ENCODE measurements at regions of chr10 and their contacts with region 1.

Region 1: GRCh38 chr10:25875556-25876165 is 58.4 kb upstream of the MYO3A start:
- DNase-seq: peak; percentile 66
- ATAC-seq: peak; percentile 75
- H3K4me3 ChIP-seq: no peak overlapping the region
- H3K4me3 Mint-ChIP-seq: no peak overlapping the region
- H3K27ac ChIP-seq: no peak overlapping the region
- H3K27ac Mint-ChIP-seq: no peak overlapping the region
- H3K4me1 ChIP-seq: no peaks in the 10 kb centered on the region
- H3K4me1 Mint-ChIP-seq: no peaks in the 10 kb centered on the region
- H3K27me3 ChIP-seq: peaks cover 0 to 4% (median 0%) of the 10 kb centered on the region in 4 experiments
- H3K27me3 Mint-ChIP-seq: peaks cover 10% of the 10 kb centered on the region
- CTCF ChIP-seq: peak; percentile 98

Region 2: GRCh38 chr10:25441270-25441669 is 434.4 kb before region 1 on chr10:
- CTCF ChIA-PET with region 1: no interaction called
- POLR2A ChIA-PET with region 1: no interaction called
- intact Hi-C with region 1: no loop called
- DNase-seq: no peak
- ATAC-seq: no peak
- H3K4me3 ChIP-seq: no peak overlapping the region
- H3K4me3 Mint-ChIP-seq: no peak overlapping the region
- H3K27ac ChIP-seq: no peak overlapping the region
- H3K27ac Mint-ChIP-seq: no peak overlapping the region
- H3K4me1 ChIP-seq: no peaks in the 10 kb centered on the region
- H3K4me1 Mint-ChIP-seq: no peaks in the 10 kb centered on the region
- H3K27me3 ChIP-seq: no peaks in the 10 kb centered on the region
- H3K27me3 Mint-ChIP-seq: no peaks in the 10 kb centered on the region
- CTCF ChIP-seq: no peak

Region 3: GRCh38 chr10:25888627-25889026 is 13.0 kb after region 1 on chr10:
- CTCF ChIA-PET with region 1: interaction called, 19 read pairs
- POLR2A ChIA-PET with region 1: no interaction called
- intact Hi-C with region 1: no loop called
- DNase-seq: no peak
- ATAC-seq: no peak
- H3K4me3 ChIP-seq: no peak overlapping the region
- H3K4me3 Mint-ChIP-seq: no peak overlapping the region
- H3K27ac ChIP-seq: no peak overlapping the region
- H3K27ac Mint-ChIP-seq: no peak overlapping the region
- H3K4me1 ChIP-seq: no peaks in the 10 kb centered on the region
- H3K4me1 Mint-ChIP-seq: no peaks in the 10 kb centered on the region
- H3K27me3 ChIP-seq: peaks cover 0 to 6% (median 2%) of the 10 kb centered on the region in 4 experiments
- H3K27me3 Mint-ChIP-seq: peaks cover 10% of the 10 kb centered on the region
- CTCF ChIP-seq: no peak

Region 4: GRCh38 chr10:25934621-25935139 is 59.0 kb after region 1 on chr10:
- CTCF ChIA-PET with region 1: interaction called, 8 read pairs
- POLR2A ChIA-PET with region 1: no interaction called
- intact Hi-C with region 1: loop called (anchors 1 kb)
- DNase-seq: peak; percentile 55
- ATAC-seq: peak; percentile 76
- H3K4me3 ChIP-seq: peak overlapping the region; percentile 22 to 57 (median 56)
- H3K4me3 Mint-ChIP-seq: peak overlapping the region; percentile 86
- H3K27ac ChIP-seq: no peak overlapping the region
- H3K27ac Mint-ChIP-seq: no peak overlapping the region
- H3K4me1 ChIP-seq: peaks cover 6 to 13% of the 10 kb centered on the region in 2 donors
- H3K4me1 Mint-ChIP-seq: peaks cover 14% of the 10 kb centered on the region
- H3K27me3 ChIP-seq: peaks cover 0 to 8% (median 6%) of the 10 kb centered on the region in 4 experiments
- H3K27me3 Mint-ChIP-seq: peaks cover 33% of the 10 kb centered on the region
- CTCF ChIP-seq: peak; percentile 48

Region 5: DNA sequence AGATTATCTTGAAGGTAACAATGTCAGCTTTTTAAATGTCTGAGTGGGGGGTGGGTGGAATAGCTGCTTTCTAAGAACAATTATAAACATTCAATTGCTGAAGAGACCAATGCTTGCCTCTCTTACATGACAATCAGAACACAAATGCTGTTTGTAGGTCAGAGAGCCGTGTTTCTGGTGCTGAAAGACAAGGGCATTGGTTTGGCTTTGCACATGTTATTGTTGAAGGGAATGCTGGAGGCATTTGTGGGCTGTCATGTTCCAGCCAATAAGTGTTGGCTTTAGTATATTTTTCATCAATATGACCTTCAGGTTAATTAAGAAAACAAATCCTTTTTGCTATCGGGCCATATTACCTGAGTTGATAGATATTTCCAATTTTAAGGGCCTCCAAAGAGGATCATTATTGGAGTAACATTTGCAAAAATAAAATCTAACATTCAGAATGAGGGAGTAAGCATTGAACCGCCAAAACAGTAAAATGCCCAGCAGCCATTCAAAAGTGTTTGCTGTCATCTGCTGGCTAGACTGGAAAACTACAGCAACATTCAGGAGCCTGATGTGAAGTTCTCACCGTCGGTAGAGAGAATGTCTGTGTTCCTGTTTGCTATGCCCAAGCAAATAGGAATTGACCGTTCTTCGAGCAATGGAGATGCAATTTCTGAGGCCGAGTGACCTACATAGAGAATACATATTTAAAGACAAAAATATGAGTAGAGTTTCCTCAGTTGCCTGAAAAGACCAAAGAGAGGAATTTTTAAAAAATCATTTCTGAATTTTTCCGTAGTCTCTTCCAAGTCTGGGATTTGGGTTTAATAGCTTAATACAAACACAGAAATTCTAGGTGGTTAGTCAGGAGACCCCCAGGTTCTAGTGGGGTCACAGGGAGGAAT is 681.3 kb after region 1 on chr10:
- CTCF ChIA-PET with region 1: interaction called, 23 read pairs
- POLR2A ChIA-PET with region 1: no interaction called
- intact Hi-C with region 1: no loop called
- DNase-seq: peak; percentile 55
- ATAC-seq: peak; percentile 36
- H3K4me3 ChIP-seq: no peak overlapping the region
- H3K4me3 Mint-ChIP-seq: no peak overlapping the region
- H3K27ac ChIP-seq: peak overlapping the region in 1 of 2 donors; percentile 1
- H3K27ac Mint-ChIP-seq: peak overlapping the region; percentile 46
- H3K4me1 ChIP-seq: no peaks in the 10 kb centered on the region
- H3K4me1 Mint-ChIP-seq: no peaks in the 10 kb centered on the region
- H3K27me3 ChIP-seq: no peaks in the 10 kb centered on the region
- H3K27me3 Mint-ChIP-seq: no peaks in the 10 kb centered on the region
- CTCF ChIP-seq: peak; percentile 94